Body of pancreas (tissue), 4 donors: ENCODE measurements at regions of chr3 and their contacts with region 1.

Region 1: GRCh38 chr3:141561426-141562034 is 74.7 kb downstream of the RASA2 start:
- DNase-seq: peak in 3 of 4 donors; percentile 12 to 46 (median 12)
- ATAC-seq: peak; percentile 53
- H3K4me3 ChIP-seq: no peak overlapping the region
- H3K27ac ChIP-seq: no peak overlapping the region
- H3K4me1 ChIP-seq: no peaks in the 10 kb centered on the region
- H3K27me3 ChIP-seq: no peaks in the 10 kb centered on the region
- CTCF ChIP-seq: peak; percentile 73 to 98 (median 97)
- POLR2A ChIP-seq: no peak

Region 2: DNA sequence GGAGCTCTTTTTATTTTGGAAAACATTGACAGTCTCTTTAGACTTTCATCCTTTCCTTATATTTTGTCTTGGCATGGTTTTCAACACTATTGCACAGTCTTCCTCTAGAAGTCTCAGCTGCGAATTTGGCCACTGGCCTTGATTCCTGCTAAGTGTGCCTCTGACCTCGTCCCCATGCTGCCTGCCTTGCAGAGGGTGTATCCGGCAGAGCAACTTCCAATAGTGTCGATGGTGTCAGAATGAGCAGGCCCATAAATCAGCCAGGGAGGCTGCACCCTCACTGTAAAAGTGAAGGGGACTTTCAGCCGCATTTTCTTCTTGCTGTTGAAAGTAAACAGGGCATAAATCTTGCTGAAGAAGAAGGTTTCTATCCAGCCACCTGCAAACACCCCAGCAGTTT is 1220.3 kb before region 1 on chr3:
- intact Hi-C with region 1: no loop called
- DNase-seq: no peak
- ATAC-seq: no peak
- H3K4me3 ChIP-seq: no peak overlapping the region
- H3K27ac ChIP-seq: no peak overlapping the region
- H3K4me1 ChIP-seq: no peaks in the 10 kb centered on the region
- H3K27me3 ChIP-seq: no peaks in the 10 kb centered on the region
- CTCF ChIP-seq: no peak
- POLR2A ChIP-seq: no peak

Region 3: DNA sequence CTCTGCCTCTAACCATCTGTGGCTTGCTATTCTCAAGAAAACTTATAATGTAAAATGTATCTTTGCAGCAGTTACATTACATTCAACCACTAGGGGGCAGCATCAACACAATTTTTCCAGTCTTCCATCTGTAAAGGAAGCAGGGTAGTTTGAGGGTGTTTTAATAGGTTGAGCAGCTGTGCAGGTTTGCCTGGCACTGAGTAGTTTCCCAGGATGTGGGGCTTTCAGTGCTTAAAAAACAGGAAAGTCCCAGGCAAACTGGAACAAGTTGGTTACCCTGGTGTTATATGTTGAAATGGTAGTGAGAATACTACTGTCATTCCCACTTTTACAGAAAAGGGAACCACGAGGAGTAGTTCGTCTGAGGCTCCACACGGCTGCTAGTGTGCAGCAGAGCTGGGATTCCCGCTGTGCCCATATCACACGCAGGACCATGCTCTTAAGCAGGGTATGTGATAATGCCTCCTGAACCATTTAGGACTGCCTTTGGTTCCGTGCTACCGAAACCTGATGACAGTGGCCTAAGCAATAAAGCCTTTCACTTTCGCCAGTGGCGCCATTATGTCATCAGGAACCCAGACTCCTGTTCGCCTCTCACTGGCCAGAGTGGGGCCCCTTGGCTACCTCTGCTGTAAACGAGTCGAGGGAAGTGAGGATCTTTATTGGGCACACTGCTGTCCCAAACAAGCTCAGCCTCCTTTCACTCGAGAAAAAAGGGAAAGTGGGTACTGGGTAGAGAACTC is 257.9 kb before region 1 on chr3:
- intact Hi-C with region 1: loop called (anchors 5 kb)
- DNase-seq: peak; percentile 68 to 82 (median 72)
- ATAC-seq: peak; percentile 91
- H3K4me3 ChIP-seq: no peak overlapping the region
- H3K27ac ChIP-seq: peak overlapping the region in 1 of 4 donors; percentile 1
- H3K4me1 ChIP-seq: peaks cover 9% of the 10 kb centered on the region
- H3K27me3 ChIP-seq: no peaks in the 10 kb centered on the region
- CTCF ChIP-seq: peak; percentile 70 to 90 (median 79)
- POLR2A ChIP-seq: no peak

Region 4: DNA sequence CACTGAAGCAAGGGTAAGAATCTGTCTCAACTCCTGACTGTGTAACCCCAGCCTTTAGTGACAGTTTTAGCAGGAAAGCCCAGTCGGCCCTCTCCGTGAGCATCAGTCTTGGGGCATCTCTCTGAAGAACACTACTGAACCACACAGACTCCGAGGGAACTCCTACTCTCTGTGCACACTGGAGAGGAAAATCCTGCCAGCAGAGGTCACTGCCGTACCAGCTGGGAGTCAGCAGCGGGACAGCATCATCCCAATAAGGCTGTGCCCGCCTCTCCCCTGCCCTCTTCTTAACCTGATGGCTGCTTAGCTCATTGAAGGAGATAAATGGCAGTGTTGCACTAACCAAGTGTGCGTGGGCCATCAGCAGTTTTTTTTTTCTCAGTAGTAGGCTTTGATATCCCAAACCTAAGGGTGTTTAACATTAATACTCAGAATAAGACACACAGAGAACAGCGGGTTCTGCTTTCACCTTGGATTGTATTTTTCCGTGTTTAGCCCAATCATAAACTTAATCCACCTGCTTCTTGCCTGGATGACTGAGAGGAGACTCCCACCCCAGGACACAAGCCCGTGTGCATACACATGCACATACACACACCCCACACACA is 101.3 kb before region 1 on chr3:
- intact Hi-C with region 1: loop called (anchors 5 kb)
- DNase-seq: peak; percentile 87 to 91 (median 88)
- ATAC-seq: peak; percentile 92
- H3K4me3 ChIP-seq: no peak overlapping the region
- H3K27ac ChIP-seq: no peak overlapping the region
- H3K4me1 ChIP-seq: peaks cover 8% of the 10 kb centered on the region
- H3K27me3 ChIP-seq: no peaks in the 10 kb centered on the region
- CTCF ChIP-seq: peak; percentile 76 to 87 (median 84)
- POLR2A ChIP-seq: no peak

Region 5: GRCh38 chr3:142270407-142270806 is 708.9 kb after region 1 on chr3:
- intact Hi-C with region 1: no loop called
- DNase-seq: no peak
- ATAC-seq: no peak
- H3K4me3 ChIP-seq: no peak overlapping the region
- H3K27ac ChIP-seq: no peak overlapping the region
- H3K4me1 ChIP-seq: no peaks in the 10 kb centered on the region
- H3K27me3 ChIP-seq: no peaks in the 10 kb centered on the region
- CTCF ChIP-seq: no peak
- POLR2A ChIP-seq: no peak